AG04450 (cell line): ENCODE measurements at regions of chr1 and their contacts with region 1.

Region 1: GRCh38 chr1:207863893-207864535 is 46.9 kb downstream of the CD34 start:
- DNase-seq: no peak
- H3K4me3 ChIP-seq: no peak overlapping the region
- H3K27ac ChIP-seq: no peak overlapping the region
- H3K27me3 ChIP-seq: no peaks in the 10 kb centered on the region
- CTCF ChIP-seq: no peak

Region 2: GRCh38 chr1:207676153-207676552 is 187.9 kb before region 1 on chr1:
- CTCF ChIA-PET with region 1: no interaction called
- POLR2A ChIA-PET with region 1: interaction called, 10 read pairs
- DNase-seq: no peak
- H3K4me3 ChIP-seq: no peak overlapping the region
- H3K27ac ChIP-seq: no peak overlapping the region
- H3K27me3 ChIP-seq: no peaks in the 10 kb centered on the region
- CTCF ChIP-seq: no peak